Dendritic cell treated with granulocyte-macrophage colony-stimulating factor and Interleukin-4, amounts not matched to agents 40 ng/mL and 50 ng/mL, for 4 days (primary cell): ENCODE measurements at regions of chr2 and their contacts with region 1.

Region 1: DNA sequence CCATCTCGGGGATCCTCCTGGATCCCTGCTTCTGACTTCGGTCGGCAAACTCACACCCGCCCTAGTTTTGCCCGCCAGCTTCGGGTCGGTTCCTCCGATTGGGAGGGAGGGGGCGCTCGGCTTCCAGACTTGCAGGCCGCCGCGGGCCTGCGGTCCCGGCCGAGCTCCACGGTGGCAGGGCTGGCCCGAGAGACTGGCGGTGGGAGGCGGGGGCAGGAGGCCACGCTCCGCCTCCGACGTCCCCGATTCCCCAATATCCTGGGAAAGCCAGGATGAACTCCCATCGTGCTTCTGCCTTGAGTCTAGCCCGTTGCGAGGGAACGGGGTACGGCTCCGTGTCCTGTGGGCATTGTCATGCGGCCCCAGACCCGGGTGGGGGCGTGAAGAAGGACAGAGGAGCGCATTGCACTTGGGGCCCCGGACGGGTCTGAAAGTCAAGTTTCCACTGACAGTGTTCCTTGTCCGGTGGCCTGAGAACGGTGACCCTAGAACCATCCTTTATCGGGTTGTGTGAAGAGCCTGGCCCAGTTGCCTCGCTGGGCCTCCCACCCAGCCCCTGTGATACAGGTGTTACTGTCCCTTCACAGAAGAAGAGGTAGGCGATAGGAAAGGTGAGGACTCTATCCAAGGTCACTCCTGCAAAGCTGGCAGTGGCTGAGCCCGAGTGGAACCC is 2.4 kb upstream of the INHBB start:
- H3K4me3 Mint-ChIP-seq: peak overlapping the region; percentile 34
- H3K27ac Mint-ChIP-seq: no peak overlapping the region
- H3K4me1 Mint-ChIP-seq: peaks cover 50% of the 10 kb centered on the region
- H3K27me3 Mint-ChIP-seq: peaks cover 60% of the 10 kb centered on the region

Region 2: DNA sequence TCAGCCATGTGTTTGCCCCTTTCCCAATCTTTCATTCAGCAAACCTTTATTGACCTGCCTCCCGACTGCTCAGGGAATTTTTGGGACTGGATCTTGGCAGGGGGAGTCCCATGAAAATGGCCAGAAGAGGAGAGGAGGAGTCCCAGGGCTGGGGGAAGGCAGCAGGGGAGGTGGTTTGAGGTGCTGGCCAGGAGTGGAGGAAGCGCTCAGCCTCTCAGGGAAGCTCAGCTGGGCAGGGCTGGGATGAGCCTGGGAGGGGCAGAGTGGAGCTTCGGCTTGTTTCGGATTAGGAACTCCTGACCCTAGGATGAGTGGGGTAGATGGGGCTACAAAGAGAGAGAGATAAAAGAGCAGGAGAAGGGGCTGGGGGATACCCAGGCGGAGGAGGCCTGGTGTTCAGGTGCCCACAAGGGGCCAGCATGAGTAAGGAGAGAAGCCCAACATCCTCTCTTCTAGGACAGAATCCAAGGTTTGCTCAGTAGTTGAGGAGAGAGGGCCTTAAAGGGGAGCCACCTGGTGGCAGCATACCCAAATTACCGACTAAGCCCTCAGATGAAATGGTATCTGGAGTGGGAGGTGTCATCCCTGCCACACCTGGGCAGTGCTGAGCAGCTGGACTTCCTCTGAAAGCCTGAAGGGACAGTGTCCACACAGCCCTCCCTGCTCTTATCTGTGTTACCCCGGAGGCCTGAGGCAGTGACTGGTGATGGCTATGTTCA is 93.5 kb after region 1 on chr2:
- intact Hi-C with region 1: loop called (anchors 5 kb)
- H3K4me3 Mint-ChIP-seq: no peak overlapping the region
- H3K27ac Mint-ChIP-seq: no peak overlapping the region
- H3K4me1 Mint-ChIP-seq: no peaks in the 10 kb centered on the region
- H3K27me3 Mint-ChIP-seq: peaks cover 38% of the 10 kb centered on the region

Region 3: DNA sequence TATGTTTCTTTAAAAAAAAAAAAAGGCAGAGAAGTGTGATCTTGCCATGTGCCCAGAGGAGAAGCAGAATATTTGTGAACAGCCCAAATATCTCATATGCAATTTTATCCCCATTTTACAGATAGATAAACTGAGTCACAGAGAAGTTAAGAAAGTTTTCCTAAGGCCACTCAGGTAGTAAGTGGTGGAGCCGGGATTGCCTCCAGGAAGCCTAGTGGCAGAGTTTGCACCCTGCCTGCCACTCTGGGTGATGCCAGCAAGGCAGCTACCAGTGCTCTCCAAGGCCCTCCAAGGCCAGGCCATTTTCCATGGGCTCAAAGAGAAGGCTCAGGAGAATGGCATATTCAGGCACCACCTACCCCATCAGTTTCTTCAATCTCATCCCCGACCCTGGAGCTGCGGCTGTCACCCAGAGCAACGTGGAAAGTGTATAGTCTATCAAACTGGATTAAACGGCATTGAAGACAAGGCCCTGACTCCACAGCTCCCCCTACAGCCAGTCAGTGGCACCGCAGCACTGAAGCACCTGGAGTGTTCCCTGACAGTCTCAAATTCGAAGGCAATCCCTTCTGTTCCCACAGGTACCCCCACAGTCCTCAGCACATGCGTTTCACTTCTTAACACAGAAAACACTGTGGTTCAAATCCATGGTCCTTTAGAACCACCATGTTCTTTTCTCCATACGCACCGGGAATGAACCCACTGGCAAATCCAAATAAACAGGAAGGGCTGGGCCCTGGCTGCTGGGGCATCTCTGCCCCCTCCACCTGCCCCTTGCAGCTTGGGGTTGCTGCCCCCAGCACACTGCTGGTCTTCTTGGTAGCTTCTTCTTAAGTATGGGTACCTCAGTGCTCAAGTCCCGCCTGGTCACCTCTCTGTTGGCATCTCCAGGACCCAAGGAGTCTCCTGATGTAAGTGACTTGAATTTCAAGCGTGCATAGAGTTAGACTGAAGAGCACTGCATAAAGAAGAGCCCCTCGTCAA is 177.7 kb after region 1 on chr2:
- intact Hi-C with region 1: loop called (anchors 10 kb)
- H3K4me3 Mint-ChIP-seq: no peak overlapping the region
- H3K27ac Mint-ChIP-seq: no peak overlapping the region
- H3K4me1 Mint-ChIP-seq: no peaks in the 10 kb centered on the region
- H3K27me3 Mint-ChIP-seq: peaks cover 23% of the 10 kb centered on the region